Activated CD4-positive, alpha-beta T cell treated with anti-CD3 and anti-CD28 coated beads for 36 hours (primary cell): ENCODE measurements at regions of chr12 and their contacts with region 1.

Region 1: GRCh38 chr12:99205111-99205510 is 442.4 kb upstream of the GARIN6 start:
- DNase-seq: no peak
- ATAC-seq: no peak
- H3K4me3 Mint-ChIP-seq: no peak overlapping the region
- H3K27ac Mint-ChIP-seq: no peak overlapping the region
- H3K4me1 Mint-ChIP-seq: no peaks in the 10 kb centered on the region
- H3K27me3 Mint-ChIP-seq: no peaks in the 10 kb centered on the region

Region 2: GRCh38 chr12:99619389-99620158 is 414.5 kb after region 1 on chr12:
- CTCF ChIA-PET with region 1: no interaction called
- POLR2A ChIA-PET with region 1: no interaction called
- intact Hi-C with region 1: loop called in 1 of 2 experiments (anchors 5 kb)
- DNase-seq: peak; percentile 19
- ATAC-seq: no peak
- H3K4me3 Mint-ChIP-seq: no peak overlapping the region
- H3K27ac Mint-ChIP-seq: no peak overlapping the region
- H3K4me1 Mint-ChIP-seq: no peaks in the 10 kb centered on the region
- H3K27me3 Mint-ChIP-seq: no peaks in the 10 kb centered on the region